Right lobe of liver (tissue), 6 donors: ENCODE measurements at regions of chr5 and their contacts with region 1.

Region 1: GRCh38 chr5:180126726-180127681 is 55.4 kb upstream of the RNF130 start:
- DNase-seq: peak in 2 of 3 donors; percentile 51 to 53
- ATAC-seq: peak; percentile 72 to 90 (median 82)
- H3K4me3 ChIP-seq: no peak overlapping the region
- H3K27ac ChIP-seq: no peak overlapping the region
- H3K4me1 ChIP-seq: peaks cover 0 to 5% (median 0%) of the 10 kb centered on the region in 4 donors
- H3K27me3 ChIP-seq: no peaks in the 10 kb centered on the region
- CTCF ChIP-seq: peak; percentile 66 to 85 (median 82)
- POLR2A ChIP-seq: no peak

Region 2: GRCh38 chr5:180212363-180213255 is 85.6 kb after region 1 on chr5:
- intact Hi-C with region 1: loop called in 1 of 2 experiments (anchors 5 kb)
- DNase-seq: no peak
- ATAC-seq: no peak
- H3K4me3 ChIP-seq: no peak overlapping the region
- H3K27ac ChIP-seq: no peak overlapping the region
- H3K4me1 ChIP-seq: peaks cover 0 to 5% (median 0%) of the 10 kb centered on the region in 4 donors
- H3K27me3 ChIP-seq: no peaks in the 10 kb centered on the region
- CTCF ChIP-seq: no peak
- POLR2A ChIP-seq: no peak

Region 3: DNA sequence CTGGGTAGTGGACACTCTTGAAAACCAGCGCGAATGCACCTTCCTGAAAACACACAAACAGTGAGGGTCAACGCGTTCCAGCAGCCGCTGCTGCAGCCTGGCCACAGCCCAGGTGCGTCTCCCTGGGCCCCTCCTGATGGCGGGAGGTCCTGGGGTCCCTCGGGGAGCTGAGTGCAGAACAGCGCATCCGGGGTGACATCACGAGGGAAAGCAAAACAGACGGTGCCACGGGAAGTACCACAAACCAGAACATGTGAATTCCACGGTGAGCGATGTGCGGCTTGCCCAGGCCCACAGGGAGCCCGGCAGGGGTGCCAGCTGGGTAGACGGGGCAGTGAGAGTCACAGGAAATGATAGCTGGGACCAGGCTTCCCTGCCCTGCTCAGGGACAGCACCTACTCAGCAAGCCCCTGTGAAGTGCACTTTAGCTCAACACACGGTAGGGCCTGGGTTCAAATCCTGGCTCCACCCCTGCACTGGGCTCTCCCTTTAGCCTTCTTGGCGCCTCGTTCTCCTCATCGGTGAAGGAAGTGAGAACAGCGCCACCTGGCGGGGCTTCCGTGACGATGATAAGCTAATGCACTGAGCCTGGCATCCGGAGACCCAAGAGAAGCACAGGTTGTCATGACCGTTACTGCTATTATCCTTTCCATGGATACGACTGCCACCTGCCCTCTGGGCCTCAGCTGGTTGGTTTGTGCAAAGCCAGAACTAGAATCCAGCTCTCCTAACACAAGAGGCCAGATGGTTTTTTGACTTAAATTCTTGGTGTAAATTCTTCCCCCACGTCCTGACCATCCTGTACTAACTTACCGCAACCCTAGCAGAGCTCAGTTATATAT is 201.5 kb after region 1 on chr5:
- intact Hi-C with region 1: loop called (anchors 5 to 10 kb)
- DNase-seq: peak; percentile 82 to 84 (median 83)
- ATAC-seq: peak; percentile 85 to 95 (median 92)
- H3K4me3 ChIP-seq: no peak overlapping the region
- H3K27ac ChIP-seq: no peak overlapping the region
- H3K4me1 ChIP-seq: no peaks in the 10 kb centered on the region
- H3K27me3 ChIP-seq: no peaks in the 10 kb centered on the region
- CTCF ChIP-seq: peak; percentile 58 to 86 (median 80)
- POLR2A ChIP-seq: no peak

Region 4: DNA sequence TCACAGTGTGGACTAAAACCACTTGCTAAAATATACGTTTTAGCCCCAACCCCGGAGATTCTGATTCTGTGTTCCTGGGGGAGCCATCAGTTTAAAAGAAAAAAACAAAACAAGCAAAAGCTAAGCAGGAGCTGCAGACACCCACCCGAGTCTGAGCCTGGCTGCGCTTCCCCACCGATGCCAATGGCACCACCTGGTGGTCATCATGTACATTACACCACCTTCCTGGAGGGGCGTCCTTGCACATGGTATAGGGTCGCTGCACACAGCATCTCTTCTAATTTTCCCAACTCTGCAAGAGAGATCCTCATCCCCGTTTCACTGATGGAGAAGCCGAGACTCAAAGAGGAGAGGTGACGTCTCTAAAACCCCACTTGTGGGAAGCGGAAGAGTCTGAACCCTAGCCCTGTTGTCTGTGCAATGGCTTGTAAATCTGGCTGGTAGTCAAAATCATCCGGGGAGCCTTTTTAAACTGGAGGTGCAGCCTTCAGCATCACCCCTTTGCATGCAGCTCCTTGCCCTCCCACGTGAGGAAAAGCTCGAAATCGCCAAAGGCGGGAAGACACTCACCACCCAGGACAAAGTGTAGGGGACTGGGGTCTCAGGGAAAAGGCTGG is 344.1 kb after region 1 on chr5:
- intact Hi-C with region 1: loop called in 1 of 2 experiments (anchors 10 kb)
- DNase-seq: peak in 2 of 3 donors; percentile 50 to 53
- ATAC-seq: peak; percentile 62 to 79 (median 71)
- H3K4me3 ChIP-seq: no peak overlapping the region
- H3K27ac ChIP-seq: no peak overlapping the region
- H3K4me1 ChIP-seq: peaks cover 0 to 11% (median 0%) of the 10 kb centered on the region in 4 donors
- H3K27me3 ChIP-seq: no peaks in the 10 kb centered on the region
- CTCF ChIP-seq: peak; percentile 74 to 89 (median 88)
- POLR2A ChIP-seq: no peak